ENCODE measurements at regions of chr16 and their contacts with region 1.

Region 1: GRCh38 chr16:27169511-27170071 is 33.7 kb upstream of the KDM8 start:
- DNase-seq: peak; percentile 48
- H3K4me3 Mint-ChIP-seq: no peak overlapping the region
- H3K27ac Mint-ChIP-seq: peak overlapping the region; percentile 6
- H3K4me1 Mint-ChIP-seq: peaks cover 48% of the 10 kb centered on the region
- H3K27me3 Mint-ChIP-seq: peaks cover 3% of the 10 kb centered on the region

Region 2: DNA sequence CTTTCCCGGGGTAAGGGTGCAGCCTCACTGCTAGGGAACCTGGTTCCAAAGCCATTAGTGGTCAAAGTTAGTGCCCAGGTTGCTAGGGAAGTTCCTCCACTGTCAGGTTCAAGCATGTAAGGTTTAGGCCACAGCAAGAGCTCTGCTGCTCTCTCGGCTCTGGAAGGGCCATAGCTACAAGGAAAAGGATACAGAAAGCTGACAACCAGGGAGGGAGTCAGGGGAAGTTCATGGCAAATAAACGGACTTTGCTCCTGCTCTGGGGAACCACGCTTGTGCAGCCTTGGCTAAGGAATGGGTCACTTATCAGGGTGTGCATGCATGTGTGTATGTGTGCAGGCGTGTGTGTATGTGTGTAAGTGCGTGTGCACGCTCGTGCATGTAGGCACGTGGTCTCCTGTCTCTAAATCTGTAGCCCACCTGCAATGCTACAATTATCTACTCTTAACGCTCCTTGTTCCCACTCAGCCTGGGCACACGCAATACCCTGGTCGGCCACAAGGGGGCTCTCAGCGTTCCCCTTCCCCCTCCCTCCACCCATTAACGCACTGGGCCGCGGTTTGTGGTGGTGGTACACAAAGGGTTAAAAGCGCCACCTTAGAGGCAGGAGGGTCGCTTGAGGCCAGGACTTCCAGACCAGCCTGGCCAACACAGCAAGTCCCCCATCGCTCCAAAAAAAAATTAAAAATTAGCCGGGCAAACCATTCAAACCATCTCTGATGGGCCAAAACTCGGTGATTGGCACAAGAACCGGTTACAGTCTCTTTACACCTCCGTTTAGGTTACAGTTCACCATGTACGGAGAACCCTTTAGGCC is 14.7 kb before region 1 on chr16:
- intact Hi-C with region 1: loop called (anchors 2 kb)
- DNase-seq: peak; percentile 39
- H3K4me3 Mint-ChIP-seq: no peak overlapping the region
- H3K27ac Mint-ChIP-seq: no peak overlapping the region
- H3K4me1 Mint-ChIP-seq: peaks cover 12% of the 10 kb centered on the region
- H3K27me3 Mint-ChIP-seq: peaks cover 2% of the 10 kb centered on the region

Measured in activated T-helper 1 cell treated with anti-CD3 and anti-CD28 coated beads, Interleukin-12 subunit alpha, Interleukin-12 subunit beta, Interleukin-2, Interleukin-4 antibody, amounts not matched to agents 30 ng/mL and 10 ng/mL and 1 ng/mL, durations not matched to agents 14 hours and 24 hours and 36 hours (primary cell).